ENCODE measurements at regions of chr18 and their contacts with region 1.

Region 1: DNA sequence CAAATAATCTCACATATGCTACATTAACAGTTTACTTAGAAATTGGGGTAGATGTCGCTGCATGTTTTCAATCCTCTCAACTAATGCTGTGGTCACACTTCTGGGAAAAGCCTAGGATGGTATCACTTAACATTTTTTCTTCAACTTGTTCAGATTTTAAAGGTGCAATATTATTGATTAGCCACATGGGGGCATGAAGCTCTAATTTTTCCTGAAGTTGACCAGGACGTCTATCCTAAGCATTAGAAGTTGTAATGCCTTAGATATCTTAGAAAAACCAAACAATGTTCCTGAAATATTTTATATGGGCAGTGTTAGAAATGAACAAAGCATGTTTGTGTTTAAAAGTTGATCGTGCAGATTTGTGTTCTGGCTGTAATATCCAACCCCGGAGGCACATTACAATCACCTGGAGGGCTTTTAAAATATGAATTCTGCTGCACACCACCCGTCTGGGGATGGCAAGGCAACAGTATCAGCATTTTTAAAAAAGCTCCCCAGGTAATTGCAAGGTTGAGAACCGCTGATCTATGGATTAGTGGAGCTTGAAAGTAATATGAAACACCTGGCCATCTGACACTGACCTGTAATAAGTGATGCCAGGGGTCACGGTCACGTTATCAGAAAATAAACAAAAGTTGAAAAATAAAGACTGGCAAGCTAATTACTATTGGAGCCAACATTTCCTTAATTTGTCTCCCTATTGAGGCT is 100.5 kb upstream of the LMAN1 start:
- DNase-seq: peak; percentile 45
- H3K4me3 ChIP-seq: no peak overlapping the region
- H3K27ac ChIP-seq: peak overlapping the region; percentile 14 to 67; a peak in 3 of 4 replicates
- H3K4me1 ChIP-seq: peaks cover 10 to 31% of the 10 kb centered on the region in 2 experiments; a peak in 3 of 4 replicates
- H3K27me3 ChIP-seq: no peaks in the 10 kb centered on the region
- CTCF ChIP-seq: peak; percentile 75
- EP300 ChIP-seq: 0 out of 4 replicates have a peak, but pooled peaks of 1 of the 2 experiments have one; percentile 16
- RAD21 ChIP-seq: peak; percentile 94

Region 2: GRCh38 chr18:59143441-59143840 is 316.1 kb before region 1 on chr18:
- CTCF ChIA-PET with region 1: no interaction called
- POLR2A ChIA-PET with region 1: no interaction called
- DNase-seq: no peak
- H3K4me3 ChIP-seq: no peak overlapping the region
- H3K27ac ChIP-seq: peak overlapping the region in 1 of 2 experiments; percentile 22; a peak in 1 of 4 replicates
- H3K4me1 ChIP-seq: peaks cover 9 to 11% of the 10 kb centered on the region in 2 experiments; a peak in 3 of 4 replicates
- H3K27me3 ChIP-seq: no peaks in the 10 kb centered on the region
- CTCF ChIP-seq: no peak
- EP300 ChIP-seq: no peak
- RAD21 ChIP-seq: no peak

Region 3: DNA sequence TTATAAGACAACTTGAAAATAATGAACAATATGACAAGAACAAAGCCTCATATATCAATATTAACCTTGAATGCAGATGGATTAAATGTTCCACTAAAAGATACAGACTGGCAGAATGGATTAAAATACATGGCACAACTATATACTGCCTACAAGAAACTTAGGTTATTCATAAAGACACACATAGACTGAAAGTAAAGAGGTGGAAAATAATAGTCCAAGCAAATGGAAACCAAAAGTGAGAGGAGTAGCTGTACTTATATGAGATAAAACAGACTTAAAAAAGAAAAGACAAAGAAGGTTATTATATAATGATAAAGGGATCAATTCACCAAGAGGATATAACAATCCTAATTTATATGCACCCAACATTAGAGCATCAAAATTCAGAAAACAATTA is 118.7 kb before region 1 on chr18:
- CTCF ChIA-PET with region 1: no interaction called
- POLR2A ChIA-PET with region 1: no interaction called
- DNase-seq: no peak
- H3K4me3 ChIP-seq: no peak overlapping the region
- H3K27ac ChIP-seq: no peak overlapping the region
- H3K4me1 ChIP-seq: no peaks in the 10 kb centered on the region
- H3K27me3 ChIP-seq: no peaks in the 10 kb centered on the region
- CTCF ChIP-seq: no peak
- EP300 ChIP-seq: no peak
- RAD21 ChIP-seq: no peak

Region 4: GRCh38 chr18:59446012-59446411 is 13.5 kb before region 1 on chr18:
- CTCF ChIA-PET with region 1: interaction called, 19 read pairs
- POLR2A ChIA-PET with region 1: no interaction called
- DNase-seq: no peak
- H3K4me3 ChIP-seq: no peak overlapping the region
- H3K27ac ChIP-seq: no peak overlapping the region
- H3K4me1 ChIP-seq: peaks cover 0 to 3% of the 10 kb centered on the region in 2 experiments; a peak in 2 of 4 replicates
- H3K27me3 ChIP-seq: no peaks in the 10 kb centered on the region
- CTCF ChIP-seq: no peak
- EP300 ChIP-seq: no peak
- RAD21 ChIP-seq: no peak

Region 5: DNA sequence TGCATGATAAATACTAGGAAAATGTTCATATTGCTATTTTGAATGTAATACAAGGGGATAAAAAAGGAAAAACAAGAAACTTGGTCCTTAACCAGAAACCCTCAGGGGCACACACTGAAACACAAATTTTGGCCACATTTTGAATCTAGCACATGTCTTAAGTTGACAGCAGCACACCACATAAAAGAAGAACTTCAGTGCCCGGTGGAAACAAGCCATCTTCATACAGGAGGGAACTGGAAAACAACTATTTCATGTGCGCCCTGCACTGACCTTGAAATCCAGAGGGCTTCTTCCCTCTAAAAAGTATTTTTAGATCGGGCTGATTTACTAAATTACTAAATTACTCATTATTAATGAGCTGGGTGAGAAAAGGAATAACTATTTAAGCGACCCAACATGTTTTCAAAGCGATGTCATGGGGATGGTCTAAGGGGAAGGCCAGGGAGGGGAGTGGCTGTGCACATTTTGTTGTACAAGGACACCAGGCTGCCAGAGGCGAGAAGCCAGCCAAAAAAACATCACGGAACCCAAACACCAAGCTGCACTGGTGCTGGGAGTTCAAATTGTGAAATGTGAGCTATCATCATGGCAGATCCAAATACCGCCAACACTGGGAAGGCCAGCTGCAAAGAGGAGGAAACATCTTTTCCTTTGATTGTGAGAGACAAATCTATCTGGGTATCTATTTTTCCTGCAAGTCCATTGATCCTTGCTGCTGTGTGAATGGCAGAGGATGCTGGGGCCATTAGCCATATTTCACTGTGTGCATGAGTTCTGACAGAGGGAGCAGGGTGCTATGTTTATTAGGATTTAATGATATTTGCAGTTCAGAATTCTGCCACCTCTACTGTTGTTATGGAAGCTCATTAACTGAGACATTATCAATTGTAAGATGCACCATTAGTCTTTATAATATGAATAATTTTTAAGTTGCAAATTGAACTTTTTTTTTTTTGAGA is 50.2 kb after region 1 on chr18:
- CTCF ChIA-PET with region 1: interaction called, 10 read pairs
- POLR2A ChIA-PET with region 1: no interaction called
- DNase-seq: no peak
- H3K4me3 ChIP-seq: no peak overlapping the region
- H3K27ac ChIP-seq: no peak overlapping the region
- H3K4me1 ChIP-seq: peaks cover 5 to 6% of the 10 kb centered on the region in 2 experiments; a peak in 3 of 4 replicates
- H3K27me3 ChIP-seq: no peaks in the 10 kb centered on the region
- CTCF ChIP-seq: no peak
- EP300 ChIP-seq: no peak
- RAD21 ChIP-seq: no peak

Region 6: DNA sequence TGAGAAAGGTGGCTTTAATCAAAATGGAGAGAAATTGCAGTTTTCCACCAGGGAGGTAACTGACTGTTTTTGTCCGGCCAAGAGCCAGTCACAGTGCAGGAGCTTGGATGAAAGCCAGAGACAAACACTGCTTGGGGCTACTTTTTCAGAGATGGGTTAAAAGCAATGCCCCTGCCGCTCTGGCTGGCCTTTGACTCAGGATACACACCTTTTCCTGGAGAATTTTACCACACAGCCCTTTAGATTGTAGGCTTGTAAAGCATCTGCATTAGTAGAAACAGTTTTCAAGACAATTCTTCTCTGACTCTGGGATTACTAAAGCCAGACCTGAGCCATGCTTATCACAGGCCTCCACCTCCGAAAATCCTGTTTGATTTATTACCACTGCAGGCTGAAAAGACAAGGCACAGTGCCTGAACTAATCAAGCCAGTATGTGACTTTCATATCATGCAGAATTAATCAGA is 158.0 kb after region 1 on chr18:
- CTCF ChIA-PET with region 1: interaction called, 12 read pairs
- POLR2A ChIA-PET with region 1: no interaction called
- DNase-seq: peak; percentile 71
- H3K4me3 ChIP-seq: no peak overlapping the region
- H3K27ac ChIP-seq: peak overlapping the region in 1 of 2 experiments; percentile 94; a peak in 2 of 4 replicates
- H3K4me1 ChIP-seq: peaks cover 0 to 22% of the 10 kb centered on the region in 2 experiments; a peak in 2 of 4 replicates
- H3K27me3 ChIP-seq: no peaks in the 10 kb centered on the region
- CTCF ChIP-seq: no peak
- EP300 ChIP-seq: peak; percentile 4 to 61; a peak in 3 of 4 replicates
- RAD21 ChIP-seq: peak; percentile 45; the same call in 1 of the 2 replicates

Region 7: DNA sequence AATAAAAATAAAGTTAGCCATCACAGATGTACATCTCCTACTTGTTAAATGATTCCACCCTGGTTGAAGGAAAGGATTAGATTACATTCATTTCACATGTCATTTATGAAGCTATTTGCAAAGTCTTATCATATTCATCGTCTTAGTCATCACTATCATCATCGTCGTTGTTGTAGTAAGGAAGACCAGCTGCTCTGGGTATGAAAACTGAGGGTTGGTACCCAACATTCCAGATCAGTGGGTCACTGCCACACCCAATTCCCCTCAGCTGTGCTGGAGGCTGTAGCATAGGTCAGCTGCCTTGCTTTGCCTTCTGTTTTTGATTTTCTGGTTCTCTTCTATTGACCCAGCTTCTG is 258.6 kb after region 1 on chr18:
- CTCF ChIA-PET with region 1: interaction called, 10 read pairs
- POLR2A ChIA-PET with region 1: no interaction called
- DNase-seq: peak; percentile 54
- H3K4me3 ChIP-seq: no peak overlapping the region
- H3K27ac ChIP-seq: peak overlapping the region; percentile 90 to 94
- H3K4me1 ChIP-seq: peaks cover 23 to 44% of the 10 kb centered on the region in 2 experiments
- H3K27me3 ChIP-seq: no peaks in the 10 kb centered on the region
- CTCF ChIP-seq: no peak
- EP300 ChIP-seq: peak in 1 of 2 experiments; percentile 97; a peak in 2 of 4 replicates
- RAD21 ChIP-seq: no peak

Region 8: DNA sequence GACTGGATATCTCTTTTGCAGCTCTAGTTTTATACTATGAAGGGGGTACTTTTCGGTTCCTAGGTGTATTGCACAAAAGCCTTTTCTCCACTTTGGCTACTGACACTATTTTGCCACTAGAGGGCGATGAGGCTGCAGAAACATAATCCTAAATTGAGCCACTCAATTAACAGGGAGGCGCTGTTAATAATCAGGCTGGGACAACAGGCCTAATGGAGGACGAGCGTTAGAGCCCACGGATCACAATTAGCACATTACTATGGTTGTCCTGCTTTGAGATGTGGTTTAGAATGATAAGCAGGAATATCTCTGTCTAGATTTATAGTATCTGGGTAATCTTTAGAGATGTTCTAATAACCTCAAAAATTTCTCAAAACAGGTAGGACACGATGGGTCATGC is 378.1 kb after region 1 on chr18:
- CTCF ChIA-PET with region 1: interaction called, 10 read pairs
- POLR2A ChIA-PET with region 1: no interaction called
- DNase-seq: peak; percentile 64
- H3K4me3 ChIP-seq: no peak overlapping the region; a peak in 1 of 4 replicates
- H3K27ac ChIP-seq: no peak overlapping the region
- H3K4me1 ChIP-seq: peaks cover 2 to 5% of the 10 kb centered on the region in 2 experiments; a peak in 1 of 4 replicates
- H3K27me3 ChIP-seq: no peaks in the 10 kb centered on the region
- CTCF ChIP-seq: peak; percentile 97
- EP300 ChIP-seq: no peak
- RAD21 ChIP-seq: peak; percentile 87